Dendritic cell treated with granulocyte-macrophage colony-stimulating factor and Interleukin-4, amounts not matched to agents 40 ng/mL and 50 ng/mL, for 4 days (primary cell): ENCODE measurements at regions of chr2 and their contacts with region 1.

Region 1: GRCh38 chr2:159531475-159531874 is 84.9 kb downstream of the BAZ2B start:
- H3K4me3 Mint-ChIP-seq: no peak overlapping the region
- H3K27ac Mint-ChIP-seq: no peak overlapping the region
- H3K4me1 Mint-ChIP-seq: peaks cover 12% of the 10 kb centered on the region
- H3K27me3 Mint-ChIP-seq: no peaks in the 10 kb centered on the region

Region 2: GRCh38 chr2:159550231-159550630 is 18.8 kb after region 1 on chr2:
- intact Hi-C with region 1: loop called (anchors 1 kb)
- H3K4me3 Mint-ChIP-seq: no peak overlapping the region
- H3K27ac Mint-ChIP-seq: no peak overlapping the region
- H3K4me1 Mint-ChIP-seq: peaks cover 31% of the 10 kb centered on the region
- H3K27me3 Mint-ChIP-seq: no peaks in the 10 kb centered on the region

Region 3: DNA sequence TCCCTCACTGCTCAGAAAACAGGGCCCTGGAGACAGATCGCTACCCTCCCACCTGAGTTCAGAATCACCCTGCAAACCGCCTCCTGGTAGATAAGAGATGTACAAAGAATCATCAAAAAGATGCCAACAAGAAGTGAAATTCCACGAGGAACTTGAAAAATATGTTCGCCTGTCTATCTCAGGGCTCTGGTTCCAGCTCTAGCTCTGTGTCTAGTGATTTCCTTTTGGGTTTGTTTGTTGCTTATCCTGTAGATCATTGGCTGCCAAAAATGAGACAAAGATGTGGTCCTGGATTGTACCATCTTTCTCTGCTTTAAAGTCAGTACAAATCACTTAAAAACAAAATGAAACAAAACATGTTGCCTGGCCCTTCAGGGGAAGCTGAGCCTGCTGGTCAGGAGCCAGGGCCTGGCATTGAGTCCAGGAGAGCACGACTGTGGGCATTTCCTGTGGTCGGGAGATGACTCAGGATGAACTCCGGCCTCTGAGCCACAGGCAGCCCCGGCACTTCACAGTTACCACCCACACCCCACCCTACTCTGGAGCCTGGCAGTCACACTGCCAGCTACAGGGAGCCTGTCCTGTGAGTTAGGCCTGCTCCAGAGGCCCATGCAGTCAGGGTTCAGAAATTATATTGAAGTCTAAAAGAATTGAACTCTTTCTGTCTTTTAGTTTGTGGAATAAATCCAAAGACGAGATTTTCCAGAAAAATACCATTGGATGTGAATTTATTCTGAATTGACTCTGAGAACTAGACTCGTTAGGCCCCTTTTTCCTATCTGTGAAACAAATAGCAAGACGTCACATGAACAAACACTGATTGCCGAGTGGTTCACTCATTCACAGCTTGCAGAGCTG is 676.6 kb after region 1 on chr2:
- intact Hi-C with region 1: no loop called
- H3K4me3 Mint-ChIP-seq: peak overlapping the region; percentile 51
- H3K27ac Mint-ChIP-seq: peak overlapping the region; percentile 86
- H3K4me1 Mint-ChIP-seq: peaks cover 43% of the 10 kb centered on the region
- H3K27me3 Mint-ChIP-seq: peaks cover 3% of the 10 kb centered on the region